ENCODE measurements at regions of chr4 and their contacts with region 1.

Region 1: GRCh38 chr4:84966383-84967242 is at the start of gene WDFY3:
- DNase-seq: peak; percentile 86
- H3K4me3 ChIP-seq: peak within 1 kb of the TSS; percentile 77
- H3K27ac ChIP-seq: peak within 1 kb of the TSS; percentile 74
- H3K4me1 ChIP-seq: no peaks in the 10 kb centered on the region
- H3K27me3 ChIP-seq: no peaks in the 10 kb centered on the region
- CTCF ChIP-seq: no peak
- total RNA-seq, gene WDFY3: 46.3 to 50.8 TPM

Region 2: DNA sequence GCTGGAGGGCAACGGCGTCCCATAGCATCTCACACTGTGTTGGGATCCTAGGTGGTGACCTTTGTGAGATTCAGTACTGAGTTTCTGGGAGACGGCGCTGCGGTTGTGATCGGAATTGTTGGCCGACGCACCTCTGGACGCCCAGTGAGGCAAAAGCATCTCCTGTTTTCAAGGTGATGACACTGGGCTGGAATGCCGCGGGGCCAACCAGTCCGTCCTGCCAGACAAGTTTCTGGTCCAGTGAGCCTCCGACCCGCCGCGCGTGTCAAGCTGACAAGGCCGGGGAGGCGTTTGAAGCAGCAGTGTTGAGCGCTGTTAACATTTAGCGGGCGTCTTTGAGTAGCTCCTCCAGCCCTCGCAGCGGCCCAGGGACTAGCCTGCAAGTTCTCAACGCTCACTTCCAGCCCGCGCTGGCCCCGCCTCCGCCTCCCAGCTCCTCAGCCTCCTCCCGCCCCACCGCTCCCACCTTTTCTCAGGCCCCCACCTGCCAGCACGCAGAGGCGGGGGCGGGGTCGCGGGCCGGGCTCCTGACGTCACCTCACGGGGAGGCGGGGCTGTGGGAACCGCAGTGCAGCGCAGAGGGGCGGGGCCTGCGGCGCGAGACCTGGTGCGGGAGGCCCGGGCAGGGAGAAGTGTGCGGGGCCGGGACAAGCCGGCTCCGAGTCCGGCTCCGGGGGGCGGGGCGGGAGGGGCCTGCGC is 384.2 kb before region 1 on chr4:
- intact Hi-C with region 1: loop called (anchors 5 kb)
- DNase-seq: peak; percentile 97
- H3K4me3 ChIP-seq: peak overlapping the region; percentile 78
- H3K27ac ChIP-seq: peak overlapping the region; percentile 90
- H3K4me1 ChIP-seq: no peaks in the 10 kb centered on the region
- H3K27me3 ChIP-seq: peaks cover 4% of the 10 kb centered on the region
- CTCF ChIP-seq: no peak

Region 3: GRCh38 chr4:84750253-84750959 is 216.2 kb before region 1 on chr4:
- intact Hi-C with region 1: loop called (anchors 1 kb)
- DNase-seq: no peak
- H3K4me3 ChIP-seq: no peak overlapping the region
- H3K27ac ChIP-seq: no peak overlapping the region
- H3K4me1 ChIP-seq: no peaks in the 10 kb centered on the region
- H3K27me3 ChIP-seq: no peaks in the 10 kb centered on the region
- CTCF ChIP-seq: peak; percentile 65